ENCODE measurements at regions of chr15 and their contacts with region 1.

Region 1: DNA sequence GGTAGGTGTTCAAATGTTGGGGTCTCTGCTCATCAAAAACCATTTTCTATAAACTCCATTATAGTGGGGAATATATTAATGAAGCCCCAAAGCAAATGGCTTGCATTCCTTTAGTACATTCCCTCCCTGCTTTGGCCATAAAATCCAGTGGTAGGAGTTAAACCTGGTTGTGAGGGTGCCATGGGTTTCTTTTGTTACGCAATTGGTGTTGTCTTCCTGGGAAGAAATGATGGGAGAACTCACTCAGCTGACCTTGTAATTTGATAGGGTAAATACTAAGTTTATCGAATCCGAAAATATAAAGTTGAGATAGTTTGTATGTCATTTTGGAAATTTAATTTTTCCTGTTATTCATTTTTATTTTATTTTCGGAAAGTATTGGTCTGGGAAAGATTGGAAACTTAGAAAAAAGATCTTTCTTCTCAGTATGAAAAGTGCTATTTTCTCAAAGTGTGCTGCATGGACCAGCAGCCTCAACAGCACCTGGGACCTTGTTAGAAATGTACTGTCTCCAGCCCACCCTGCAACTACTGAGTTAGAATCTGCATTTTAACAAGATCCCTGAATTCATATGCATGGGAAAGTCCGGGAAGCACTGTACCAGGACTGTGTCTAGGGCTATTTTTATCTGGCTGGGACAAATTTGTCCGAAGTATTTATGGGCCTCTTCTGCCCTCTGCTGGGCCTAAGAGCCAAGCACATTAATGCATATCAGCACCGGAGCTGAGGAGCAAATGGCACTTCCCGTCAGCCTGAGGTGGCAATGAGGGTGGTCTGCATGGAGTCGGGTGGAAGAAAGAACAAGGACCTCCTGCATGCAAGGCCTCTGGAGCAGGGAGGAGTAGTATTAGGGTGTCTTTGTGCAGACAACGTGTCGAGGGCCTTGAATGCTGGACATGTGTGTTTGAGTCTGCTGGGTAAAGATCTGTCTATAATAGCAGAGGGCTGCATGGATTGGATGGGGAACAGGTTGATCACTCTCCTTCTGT is 54.7 kb downstream of the FAM81A start:
- DNase-seq: peak; percentile 67 to 82
- ATAC-seq: peak; percentile 93
- H3K4me3 ChIP-seq: no peak overlapping the region
- H3K27ac ChIP-seq: no peak overlapping the region
- H3K4me1 ChIP-seq: no peaks in the 10 kb centered on the region
- H3K27me3 ChIP-seq: no peaks in the 10 kb centered on the region

Region 2: DNA sequence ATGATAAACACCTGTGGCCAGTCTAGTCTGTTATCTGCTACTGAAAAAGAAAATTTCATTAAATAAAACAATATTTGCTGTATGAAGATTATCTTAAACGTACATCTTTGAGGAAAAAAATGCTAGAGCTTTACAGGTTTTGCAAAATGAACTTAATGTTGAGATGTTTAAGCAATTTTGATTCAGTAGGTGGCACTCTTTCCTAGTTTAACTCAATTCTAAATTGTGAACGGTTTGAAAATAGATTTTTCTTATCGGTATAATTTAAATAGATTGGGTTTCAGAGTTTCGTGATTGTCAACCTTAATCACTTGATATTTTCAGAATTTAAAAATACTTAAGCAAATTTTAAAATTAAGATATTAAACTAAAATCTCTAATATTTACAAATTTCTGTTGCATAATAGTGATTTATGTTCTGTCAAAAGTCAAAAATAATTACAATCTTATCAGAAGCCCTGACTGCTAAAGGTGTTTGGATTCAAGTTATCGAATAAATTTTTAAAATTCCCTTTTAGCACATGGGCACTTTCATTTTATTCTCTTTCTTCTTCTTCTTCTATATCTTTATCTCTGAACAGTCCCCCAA is 512.2 kb before region 1 on chr15:
- intact Hi-C with region 1: loop called (anchors 2 to 5 kb)
- DNase-seq: no peak
- ATAC-seq: no peak
- H3K4me3 ChIP-seq: no peak overlapping the region
- H3K27ac ChIP-seq: no peak overlapping the region
- H3K4me1 ChIP-seq: no peaks in the 10 kb centered on the region
- H3K27me3 ChIP-seq: no peaks in the 10 kb centered on the region

Region 3: GRCh38 chr15:59104912-59105732 is 387.6 kb before region 1 on chr15 and contains the start of gene CCNB2:
- intact Hi-C with region 1: loop called in 1 of 2 experiments (anchors 10 kb)
- DNase-seq: peak; percentile 90 to 94
- ATAC-seq: peak; percentile 98
- H3K4me3 ChIP-seq: peak within 1 kb of the TSS; percentile 32 to 77
- H3K27ac ChIP-seq: no peak within 1 kb of the TSS
- H3K4me1 ChIP-seq: no peaks in the 10 kb centered on the region
- H3K27me3 ChIP-seq: no peaks in the 10 kb centered on the region
- total RNA-seq, gene CCNB2: 0.32 to 2.2 TPM

Region 4: DNA sequence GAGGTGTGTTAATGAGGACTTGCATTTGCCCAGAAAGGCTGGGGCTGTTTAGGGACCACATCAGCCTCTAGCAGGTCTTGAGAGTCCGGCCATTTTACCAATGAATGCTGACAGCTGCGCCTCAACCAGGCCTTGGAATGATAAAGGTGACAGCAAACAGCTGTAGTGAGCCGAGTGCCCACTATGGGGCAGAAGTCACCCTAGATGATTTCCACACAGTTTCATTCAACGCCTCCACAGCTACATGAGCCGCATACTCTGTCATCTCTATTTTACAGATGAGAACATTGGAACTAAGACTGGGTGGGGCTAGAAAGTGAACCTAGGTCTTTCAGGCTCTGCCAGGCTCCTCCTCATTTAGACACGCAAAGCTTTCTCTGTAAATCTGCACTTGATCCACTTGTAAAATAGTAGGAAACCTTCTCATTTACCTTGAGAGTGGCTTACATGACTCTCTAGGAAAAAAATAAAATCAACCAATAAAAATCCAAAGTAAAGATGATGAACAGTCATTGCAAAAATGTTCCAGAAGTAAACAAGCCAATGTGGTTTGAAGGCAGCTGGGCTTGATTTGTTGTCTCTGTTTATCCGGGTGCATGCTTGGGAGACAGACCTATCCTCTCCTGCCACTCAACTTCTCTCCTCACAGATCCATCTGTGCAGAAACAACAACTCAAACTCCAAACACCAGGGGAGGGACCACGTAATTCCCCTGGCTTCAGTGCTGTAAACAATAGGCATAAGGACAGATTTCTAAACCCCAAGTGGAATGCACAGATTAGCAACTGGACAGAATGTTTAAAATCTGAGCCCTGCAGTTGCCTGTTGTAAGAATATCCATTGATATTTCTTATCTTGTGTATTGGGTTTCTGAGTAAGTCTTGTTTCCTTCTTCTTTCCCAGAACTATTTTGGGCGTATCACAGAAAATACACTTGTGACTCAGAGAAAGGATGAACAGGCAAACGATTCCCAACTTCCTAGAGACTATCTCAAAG is 317.6 kb before region 1 on chr15:
- intact Hi-C with region 1: loop called in 1 of 2 experiments (anchors 10 kb)
- DNase-seq: peak in 1 of 2 donors; percentile 68
- ATAC-seq: peak; percentile 59
- H3K4me3 ChIP-seq: no peak overlapping the region
- H3K27ac ChIP-seq: no peak overlapping the region
- H3K4me1 ChIP-seq: peaks cover 0 to 5% of the 10 kb centered on the region in 2 donors
- H3K27me3 ChIP-seq: no peaks in the 10 kb centered on the region

Region 5: GRCh38 chr15:59247364-59247763 is 245.3 kb before region 1 on chr15:
- intact Hi-C with region 1: loop called (anchors 10 kb)
- DNase-seq: peak in 1 of 2 donors; percentile 64
- ATAC-seq: no peak
- H3K4me3 ChIP-seq: no peak overlapping the region
- H3K27ac ChIP-seq: no peak overlapping the region
- H3K4me1 ChIP-seq: no peaks in the 10 kb centered on the region
- H3K27me3 ChIP-seq: no peaks in the 10 kb centered on the region

Region 6: DNA sequence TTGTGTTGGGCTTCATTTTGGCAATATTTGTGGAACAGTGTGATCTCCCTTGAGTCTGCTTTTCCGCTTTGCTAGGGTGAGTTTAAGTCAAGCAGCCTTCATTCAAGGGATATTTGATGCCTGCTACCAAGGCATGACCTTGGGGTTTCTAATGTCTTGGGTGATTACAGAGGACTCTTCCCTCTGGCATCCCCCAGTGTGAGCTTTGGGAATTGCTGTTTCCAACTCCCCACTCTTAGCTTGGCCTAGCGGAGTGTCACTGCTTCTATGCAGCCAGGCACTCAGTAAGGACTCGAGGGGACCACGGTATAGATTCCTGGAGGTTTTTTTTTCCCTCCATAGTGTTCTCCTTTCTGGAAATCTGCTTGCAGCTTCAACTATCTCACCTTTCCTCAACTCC is 140.0 kb after region 1 on chr15:
- intact Hi-C with region 1: no loop called
- DNase-seq: no peak
- ATAC-seq: no peak
- H3K4me3 ChIP-seq: no peak overlapping the region
- H3K27ac ChIP-seq: no peak overlapping the region
- H3K4me1 ChIP-seq: no peaks in the 10 kb centered on the region
- H3K27me3 ChIP-seq: no peaks in the 10 kb centered on the region